MCF 10A (cell line): ENCODE measurements at regions of chr2 and their contacts with region 1.

Region 1: DNA sequence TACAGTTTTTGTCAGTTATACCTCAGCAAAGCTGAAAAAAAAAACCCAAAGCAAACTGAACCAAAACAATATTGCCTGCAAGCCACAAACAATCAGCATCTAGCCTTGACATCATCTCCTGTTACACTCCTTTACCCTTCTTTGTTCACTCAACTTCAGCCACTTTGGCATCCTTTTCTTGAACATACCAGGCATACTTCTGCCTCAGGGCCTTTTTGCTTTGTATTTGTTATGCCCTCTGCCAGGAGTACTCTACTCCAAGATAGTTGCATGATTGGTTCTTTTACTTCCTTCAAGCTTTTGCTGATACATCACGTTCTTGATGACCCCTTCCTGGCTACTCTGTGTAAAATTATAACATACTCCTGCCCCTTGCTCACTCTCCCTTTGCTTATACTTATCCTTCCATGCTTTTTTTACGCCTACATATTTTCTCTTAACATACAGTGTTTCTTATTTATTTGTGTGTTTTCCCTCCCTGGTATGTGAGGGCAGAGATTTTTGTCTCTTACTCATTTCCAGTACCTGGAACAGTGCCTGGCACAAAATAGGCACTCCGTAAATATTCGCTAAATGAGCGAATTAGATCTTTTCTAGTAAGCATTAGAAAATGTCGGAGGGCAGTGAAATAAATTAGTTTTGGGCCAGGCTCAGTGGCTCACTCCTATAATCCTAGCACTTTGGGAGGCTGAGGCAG is 12.7 kb downstream of the ABI2 start:
- DNase-seq: peak; percentile 84
- H3K4me3 Mint-ChIP-seq: peak overlapping the region; percentile 62
- H3K27ac Mint-ChIP-seq: peak overlapping the region; percentile 90
- H3K4me1 Mint-ChIP-seq: peaks cover 25% of the 10 kb centered on the region
- H3K27me3 Mint-ChIP-seq: no peaks in the 10 kb centered on the region
- CTCF ChIP-seq: no peak

Region 2: DNA sequence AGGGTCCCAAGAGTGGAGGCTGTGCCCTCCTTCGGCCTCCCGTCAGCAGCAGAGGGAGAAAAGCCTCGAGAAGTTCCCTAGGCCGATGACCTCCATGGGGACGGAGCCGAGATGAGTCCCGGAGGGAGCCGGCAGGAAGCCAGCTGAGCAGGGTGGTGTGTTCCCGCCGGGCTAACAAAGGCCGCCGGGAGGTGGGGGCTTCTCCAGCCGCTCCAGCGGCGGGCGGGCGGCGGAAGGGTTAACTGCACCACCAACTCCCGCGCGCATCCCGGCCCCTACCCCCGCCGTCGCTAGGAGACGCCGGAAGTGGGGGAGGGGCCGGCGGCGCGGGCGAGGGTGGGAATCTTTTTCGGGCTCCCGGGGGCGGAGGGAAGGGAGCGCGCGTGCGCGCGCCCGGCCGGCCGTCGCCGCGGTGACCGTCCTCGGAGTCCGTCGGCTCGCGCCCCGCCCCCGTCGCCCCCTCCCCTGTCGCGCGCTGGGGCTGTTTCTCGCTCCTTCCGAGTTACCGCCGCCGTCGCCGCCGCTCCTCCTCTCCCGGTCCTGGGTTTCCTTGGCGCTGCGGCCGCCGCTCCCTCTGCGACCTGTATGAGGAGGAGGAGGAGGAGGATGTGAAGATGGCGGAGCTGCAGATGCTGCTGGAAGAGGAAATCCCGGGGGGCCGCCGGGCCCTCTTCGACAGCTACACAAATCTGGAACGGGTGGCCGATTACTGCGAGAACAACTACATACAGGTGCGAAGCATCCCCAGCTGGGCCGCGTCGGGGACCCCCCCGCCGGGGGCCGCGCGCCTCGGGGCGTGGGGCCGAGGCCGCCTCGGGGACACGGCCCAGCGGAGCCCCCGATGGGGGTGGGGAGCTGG is 12.8 kb before region 1 on chr2 and contains the start of gene ABI2:
- CTCF ChIA-PET with region 1: interaction called, 4 read pairs
- POLR2A ChIA-PET with region 1: interaction called, 17 read pairs
- intact Hi-C with region 1: no loop called
- DNase-seq: peak; percentile 73
- H3K4me3 Mint-ChIP-seq: peak within 1 kb of the TSS; percentile 76
- H3K27ac Mint-ChIP-seq: peak within 1 kb of the TSS; percentile 61
- H3K4me1 Mint-ChIP-seq: peaks cover 18% of the 10 kb centered on the region
- H3K27me3 Mint-ChIP-seq: no peaks in the 10 kb centered on the region
- CTCF ChIP-seq: no peak
- total RNA-seq, gene ABI2: 57.3 and 65.6 TPM in 2 replicates